GM12878 (cell line): ENCODE measurements at regions of chr18 and their contacts with region 1.

Region 1: GRCh38 chr18:2932247-2933181 is 80.4 kb downstream of the LPIN2 start:
- DNase-seq: peak; percentile 23
- ATAC-seq: peak; percentile 76
- H3K4me3 ChIP-seq: no peak overlapping the region
- H3K27ac ChIP-seq: no peak overlapping the region
- H3K4me1 ChIP-seq: no peaks in the 10 kb centered on the region
- H3K27me3 ChIP-seq: no peaks in the 10 kb centered on the region
- CTCF ChIP-seq: peak; percentile 40 to 71 (median 59); a peak in 5 of 6 replicates
- EP300 ChIP-seq: no peak
- POLR2A ChIP-seq: no peak
- RAD21 ChIP-seq: peak; percentile 94

Region 2: GRCh38 chr18:2971741-2972552 is 39.4 kb after region 1 on chr18:
- CTCF ChIA-PET with region 1: interaction called, 14 read pairs
- POLR2A ChIA-PET with region 1: interaction called, 6 read pairs
- RAD21 ChIA-PET with region 1: interaction called, 10 read pairs
- SMC1A ChIA-PET with region 1: interaction called, 6 read pairs
- in situ Hi-C with region 1: no loop called
- intact Hi-C with region 1: no loop called
- DNase-seq: peak; percentile 90
- ATAC-seq: peak; percentile 89
- H3K4me3 ChIP-seq: peak overlapping the region; percentile 60
- H3K27ac ChIP-seq: peak overlapping the region; percentile 94
- H3K4me1 ChIP-seq: peaks cover 51% of the 10 kb centered on the region
- H3K27me3 ChIP-seq: no peaks in the 10 kb centered on the region
- CTCF ChIP-seq: no peak
- EP300 ChIP-seq: peak; percentile 32 to 48; a peak in 1 of 4 replicates
- POLR2A ChIP-seq: peak; percentile 78
- RAD21 ChIP-seq: no peak

Region 3: GRCh38 chr18:2985628-2986027 is 53.1 kb after region 1 on chr18:
- CTCF ChIA-PET with region 1: interaction called, 255 read pairs
- POLR2A ChIA-PET with region 1: interaction called, 16 read pairs
- RAD21 ChIA-PET with region 1: interaction called, 238 read pairs
- SMC1A ChIA-PET with region 1: interaction called, 334 read pairs
- in situ Hi-C with region 1: no loop called
- intact Hi-C with region 1: loop called (anchors 1 kb)
- DNase-seq: no peak
- ATAC-seq: peak; percentile 67
- H3K4me3 ChIP-seq: no peak overlapping the region
- H3K27ac ChIP-seq: no peak overlapping the region
- H3K4me1 ChIP-seq: peaks cover 21% of the 10 kb centered on the region
- H3K27me3 ChIP-seq: no peaks in the 10 kb centered on the region
- CTCF ChIP-seq: peak; percentile 56 to 71 (median 62)
- EP300 ChIP-seq: no peak
- POLR2A ChIP-seq: no peak
- RAD21 ChIP-seq: peak; percentile 81

Region 4: GRCh38 chr18:3129053-3129864 is 196.7 kb after region 1 on chr18:
- CTCF ChIA-PET with region 1: interaction called, 36 read pairs
- POLR2A ChIA-PET with region 1: no interaction called
- RAD21 ChIA-PET with region 1: interaction called, 15 read pairs
- SMC1A ChIA-PET with region 1: interaction called, 19 read pairs
- in situ Hi-C with region 1: loop called (anchors 10 kb)
- intact Hi-C with region 1: loop called (anchors 1 kb)
- DNase-seq: no peak
- ATAC-seq: peak; percentile 100
- H3K4me3 ChIP-seq: no peak overlapping the region
- H3K27ac ChIP-seq: no peak overlapping the region
- H3K4me1 ChIP-seq: no peaks in the 10 kb centered on the region
- H3K27me3 ChIP-seq: no peaks in the 10 kb centered on the region
- CTCF ChIP-seq: peak; percentile 92 to 95 (median 95)
- EP300 ChIP-seq: no peak
- POLR2A ChIP-seq: no peak
- RAD21 ChIP-seq: peak; percentile 48